Endothelial cell of umbilical vein (primary cell): ENCODE measurements at regions of chr5 and their contacts with region 1.

Region 1: GRCh38 chr5:114223866-114224265 is 138.0 kb upstream of the KCNN2 start:
- DNase-seq: peak; percentile 53
- H3K4me3 ChIP-seq: no peak overlapping the region
- H3K27ac ChIP-seq: no peak overlapping the region
- H3K4me1 ChIP-seq: no peaks in the 10 kb centered on the region
- H3K27me3 ChIP-seq: no peaks in the 10 kb centered on the region
- CTCF ChIP-seq: peak; percentile 41 to 53
- POLR2A ChIP-seq: no peak

Region 2: GRCh38 chr5:113806250-113806649 is 417.6 kb before region 1 on chr5:
- CTCF ChIA-PET with region 1: no interaction called
- POLR2A ChIA-PET with region 1: no interaction called
- dilution Hi-C with region 1: no loop called
- intact Hi-C with region 1: loop called (anchors 10 kb)
- DNase-seq: peak; percentile 71
- H3K4me3 ChIP-seq: peak overlapping the region in 1 of 3 experiments; percentile 24
- H3K27ac ChIP-seq: peak overlapping the region; percentile 2
- H3K4me1 ChIP-seq: peaks cover 14% of the 10 kb centered on the region
- H3K27me3 ChIP-seq: no peaks in the 10 kb centered on the region
- CTCF ChIP-seq: peak; percentile 34 to 38
- POLR2A ChIP-seq: no peak

Region 3: GRCh38 chr5:114070093-114070722 is 153.7 kb before region 1 on chr5:
- CTCF ChIA-PET with region 1: no interaction called
- POLR2A ChIA-PET with region 1: no interaction called
- dilution Hi-C with region 1: no loop called
- intact Hi-C with region 1: no loop called
- DNase-seq: no peak
- H3K4me3 ChIP-seq: no peak overlapping the region
- H3K27ac ChIP-seq: no peak overlapping the region
- H3K4me1 ChIP-seq: no peaks in the 10 kb centered on the region
- H3K27me3 ChIP-seq: no peaks in the 10 kb centered on the region
- CTCF ChIP-seq: no peak
- POLR2A ChIP-seq: no peak

Region 4: GRCh38 chr5:114208588-114208987 is 15.3 kb before region 1 on chr5:
- CTCF ChIA-PET with region 1: interaction called, 13 read pairs
- POLR2A ChIA-PET with region 1: no interaction called
- dilution Hi-C with region 1: no loop called
- intact Hi-C with region 1: no loop called
- DNase-seq: no peak
- H3K4me3 ChIP-seq: no peak overlapping the region
- H3K27ac ChIP-seq: no peak overlapping the region
- H3K4me1 ChIP-seq: no peaks in the 10 kb centered on the region
- H3K27me3 ChIP-seq: peaks cover 0 to 5% of the 10 kb centered on the region in 2 experiments
- CTCF ChIP-seq: no peak
- POLR2A ChIP-seq: no peak

Region 5: GRCh38 chr5:114237766-114238165 is 13.9 kb after region 1 on chr5:
- CTCF ChIA-PET with region 1: interaction called, 11 read pairs
- POLR2A ChIA-PET with region 1: no interaction called
- dilution Hi-C with region 1: no loop called
- intact Hi-C with region 1: no loop called
- DNase-seq: peak; percentile 30
- H3K4me3 ChIP-seq: no peak overlapping the region
- H3K27ac ChIP-seq: no peak overlapping the region
- H3K4me1 ChIP-seq: no peaks in the 10 kb centered on the region
- H3K27me3 ChIP-seq: no peaks in the 10 kb centered on the region
- CTCF ChIP-seq: no peak
- POLR2A ChIP-seq: no peak

Region 6: GRCh38 chr5:114391321-114391720 is 167.5 kb after region 1 on chr5:
- CTCF ChIA-PET with region 1: no interaction called
- POLR2A ChIA-PET with region 1: no interaction called
- dilution Hi-C with region 1: no loop called
- intact Hi-C with region 1: no loop called
- DNase-seq: peak; percentile 45
- H3K4me3 ChIP-seq: no peak overlapping the region
- H3K27ac ChIP-seq: no peak overlapping the region
- H3K4me1 ChIP-seq: no peaks in the 10 kb centered on the region
- H3K27me3 ChIP-seq: peaks cover 0 to 2% of the 10 kb centered on the region in 2 experiments
- CTCF ChIP-seq: no peak
- POLR2A ChIP-seq: no peak